ENCODE measurements at regions of chr10 and their contacts with region 1.

Region 1: DNA sequence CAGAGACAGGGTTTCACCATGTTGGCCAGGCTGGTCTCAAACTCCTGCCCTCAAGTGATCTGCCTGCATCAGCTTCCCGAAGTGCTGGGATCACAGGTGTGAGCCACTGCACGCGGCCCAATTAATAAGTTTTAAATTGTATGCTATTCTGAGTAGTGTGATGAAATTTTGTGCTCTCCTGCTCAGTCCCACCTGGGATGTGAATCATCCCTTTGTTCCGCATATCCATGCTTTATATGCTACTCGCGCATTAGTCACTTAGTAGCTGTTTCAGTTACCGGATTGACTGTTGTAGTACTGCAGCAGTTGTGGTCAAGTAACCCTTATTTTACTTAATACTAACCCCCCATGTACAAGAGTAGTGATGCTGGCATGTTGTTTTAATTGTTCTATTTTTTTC is 47.3 kb upstream of the OIT3 start:
- DNase-seq: no peak
- H3K4me3 Mint-ChIP-seq: no peak overlapping the region
- H3K27ac Mint-ChIP-seq: no peak overlapping the region
- H3K4me1 Mint-ChIP-seq: peaks cover 4% of the 10 kb centered on the region
- H3K27me3 Mint-ChIP-seq: no peaks in the 10 kb centered on the region

Region 2: GRCh38 chr10:73060738-73061635 is 214.8 kb after region 1 on chr10:
- intact Hi-C with region 1: loop called (anchors 10 kb)
- DNase-seq: no peak
- H3K4me3 Mint-ChIP-seq: no peak overlapping the region
- H3K27ac Mint-ChIP-seq: peak overlapping the region; percentile 81
- H3K4me1 Mint-ChIP-seq: peaks cover 18% of the 10 kb centered on the region
- H3K27me3 Mint-ChIP-seq: no peaks in the 10 kb centered on the region